ENCODE measurements at regions of chr13 and their contacts with region 1.

Region 1: GRCh38 chr13:48595431-48596429 is 58.0 kb upstream of the CYSLTR2 start:
- DNase-seq: peak in 4 of 5 donors; percentile 63 to 76 (median 70)
- ATAC-seq: peak; percentile 87 to 96 (median 94)
- H3K4me3 ChIP-seq: no peak overlapping the region
- H3K27ac ChIP-seq: peak overlapping the region in 3 of 12 donors; percentile 22 to 33 (median 32)
- H3K4me1 ChIP-seq: peaks cover 0 to 8% (median 2%) of the 10 kb centered on the region in 12 donors
- H3K27me3 ChIP-seq: no peaks in the 10 kb centered on the region
- CTCF ChIP-seq: peak; percentile 48 to 80 (median 74)
- POLR2A ChIP-seq: no peak

Region 2: GRCh38 chr13:48579165-48579918 is 16.4 kb before region 1 on chr13:
- intact Hi-C with region 1: no loop called
- DNase-seq: no peak
- ATAC-seq: peak; percentile 33 to 74 (median 47)
- H3K4me3 ChIP-seq: no peak overlapping the region
- H3K27ac ChIP-seq: peak overlapping the region in 6 of 12 donors; percentile 1 to 93 (median 38)
- H3K4me1 ChIP-seq: peaks cover 0 to 68% (median 16%) of the 10 kb centered on the region in 12 donors
- H3K27me3 ChIP-seq: no peaks in the 10 kb centered on the region
- CTCF ChIP-seq: no peak
- POLR2A ChIP-seq: no peak

Region 3: GRCh38 chr13:48731957-48732569 is 136.3 kb after region 1 on chr13:
- intact Hi-C with region 1: loop called in 1 of 10 experiments (anchors 10 kb)
- DNase-seq: peak in 4 of 5 donors; percentile 38 to 74 (median 42)
- ATAC-seq: peak in 3 of 4 donors; percentile 53 to 75 (median 55)
- H3K4me3 ChIP-seq: peak overlapping the region in 4 of 12 donors; percentile 16 to 34 (median 24)
- H3K27ac ChIP-seq: peak overlapping the region in 1 of 12 donors; percentile 39
- H3K4me1 ChIP-seq: peaks cover 0 to 17% (median 1%) of the 10 kb centered on the region in 12 donors
- H3K27me3 ChIP-seq: no peaks in the 10 kb centered on the region
- CTCF ChIP-seq: peak; percentile 39 to 73 (median 54)
- POLR2A ChIP-seq: no peak

Region 4: DNA sequence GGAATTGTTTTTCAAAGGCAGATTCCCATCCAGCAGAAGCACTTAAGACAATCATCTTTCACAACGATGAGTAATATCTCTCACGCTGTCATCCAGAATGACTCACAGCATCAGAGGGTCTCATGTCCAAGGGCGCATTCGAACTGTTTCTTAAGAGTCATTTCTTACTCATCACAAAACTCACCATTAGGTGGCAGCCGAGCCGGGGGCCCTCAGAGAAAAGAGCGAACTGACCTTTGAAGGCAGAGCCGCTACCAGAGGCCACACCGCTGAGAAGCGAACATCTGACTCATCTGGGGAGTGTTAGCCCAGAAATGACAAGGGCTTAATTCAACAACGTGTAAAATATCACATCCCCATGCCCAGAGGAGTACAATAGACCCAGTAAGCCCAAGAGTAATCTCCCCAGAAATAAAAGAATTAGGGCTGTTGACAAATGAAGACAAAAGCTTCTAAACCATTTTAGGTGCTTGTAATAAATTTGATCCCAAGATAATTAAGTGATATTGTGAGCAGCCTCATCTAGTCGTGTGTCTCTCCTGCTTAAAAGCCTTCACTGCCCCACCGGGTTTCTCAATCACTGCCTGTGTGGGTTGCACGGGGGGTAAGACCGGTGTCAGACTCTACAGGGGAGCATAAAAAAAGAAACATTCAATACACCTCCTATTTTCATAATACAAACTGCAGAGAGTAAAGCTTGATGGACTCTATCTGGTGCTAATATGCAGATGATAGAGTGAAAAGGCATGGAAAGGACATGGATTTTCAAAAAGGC is 154.2 kb after region 1 on chr13:
- intact Hi-C with region 1: no loop called
- DNase-seq: peak; percentile 74 to 90 (median 86)
- ATAC-seq: peak; percentile 66 to 91 (median 85)
- H3K4me3 ChIP-seq: no peak overlapping the region
- H3K27ac ChIP-seq: peak overlapping the region; percentile 62 to 86 (median 82)
- H3K4me1 ChIP-seq: peaks cover 0 to 36% (median 20%) of the 10 kb centered on the region in 12 donors
- H3K27me3 ChIP-seq: no peaks in the 10 kb centered on the region
- CTCF ChIP-seq: peak; percentile 26 to 69 (median 46)
- POLR2A ChIP-seq: no peak

Region 5: DNA sequence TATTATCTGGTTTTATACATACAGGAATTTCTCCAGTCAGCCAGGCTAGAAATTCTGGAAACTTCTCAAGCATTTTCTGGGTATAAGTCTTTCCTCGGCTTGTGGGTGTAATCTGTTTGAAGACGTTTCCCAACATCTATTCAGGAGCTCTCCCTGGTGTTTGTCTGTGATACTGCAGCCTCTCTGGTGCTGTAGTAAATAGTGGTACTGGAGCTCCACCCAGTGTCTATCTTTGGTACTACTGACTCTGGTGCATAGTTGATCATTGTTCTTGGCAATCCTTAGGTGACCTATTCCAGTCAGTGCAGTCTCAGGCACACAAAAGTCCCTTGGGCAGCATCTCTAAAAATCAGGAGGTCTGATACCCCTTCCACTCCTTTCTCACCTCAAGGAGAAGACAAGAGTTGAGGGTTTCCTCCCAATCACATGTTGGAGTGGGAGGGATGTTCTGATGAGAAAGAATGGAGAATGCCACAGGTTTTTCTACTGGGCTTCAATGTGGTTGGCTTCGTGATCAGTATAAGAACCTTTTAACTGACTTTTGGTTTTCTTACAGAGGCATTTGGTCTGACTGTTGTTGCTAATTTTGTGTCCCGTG is 173.5 kb after region 1 on chr13:
- intact Hi-C with region 1: loop called (anchors 1 to 5 kb)
- DNase-seq: peak in 4 of 5 donors; percentile 71 to 86 (median 81)
- ATAC-seq: peak; percentile 57 to 96 (median 92)
- H3K4me3 ChIP-seq: no peak overlapping the region
- H3K27ac ChIP-seq: peak overlapping the region in 4 of 12 donors; percentile 27 to 44 (median 31)
- H3K4me1 ChIP-seq: peaks cover 0 to 14% (median 0%) of the 10 kb centered on the region in 12 donors
- H3K27me3 ChIP-seq: no peaks in the 10 kb centered on the region
- CTCF ChIP-seq: peak; percentile 94 to 100 (median 99)
- POLR2A ChIP-seq: no peak

Region 6: GRCh38 chr13:49272296-49272695 is 676.6 kb after region 1 on chr13:
- intact Hi-C with region 1: loop called in 1 of 10 experiments (anchors 10 kb)
- DNase-seq: no peak
- ATAC-seq: no peak
- H3K4me3 ChIP-seq: no peak overlapping the region
- H3K27ac ChIP-seq: no peak overlapping the region
- H3K4me1 ChIP-seq: no peaks in the 10 kb centered on the region
- H3K27me3 ChIP-seq: no peaks in the 10 kb centered on the region
- CTCF ChIP-seq: no peak
- POLR2A ChIP-seq: no peak

Region 7: GRCh38 chr13:49278211-49278610 is 682.5 kb after region 1 on chr13:
- intact Hi-C with region 1: loop called in 3 of 10 experiments (anchors 5 to 10 kb)
- DNase-seq: no peak
- ATAC-seq: no peak
- H3K4me3 ChIP-seq: no peak overlapping the region
- H3K27ac ChIP-seq: no peak overlapping the region
- H3K4me1 ChIP-seq: no peaks in the 10 kb centered on the region
- H3K27me3 ChIP-seq: no peaks in the 10 kb centered on the region
- CTCF ChIP-seq: no peak
- POLR2A ChIP-seq: no peak

Measured in heart left ventricle (tissue), 16 donors.